ENCODE measurements at regions of chr10 and their contacts with region 1.

Region 1: GRCh38 chr10:24209946-24210491 is 1.1 kb downstream of the KIAA1217 start:
- DNase-seq: no peak
- ATAC-seq: peak in 1 of 2 donors; percentile 49
- H3K4me3 ChIP-seq: peak overlapping the region; percentile 94
- H3K27ac ChIP-seq: peak overlapping the region; percentile 66
- H3K4me1 ChIP-seq: peaks cover 25% of the 10 kb centered on the region
- H3K27me3 ChIP-seq: no peaks in the 10 kb centered on the region

Region 2: GRCh38 chr10:24240039-24240751 is 30.2 kb after region 1 on chr10:
- intact Hi-C with region 1: loop called in 1 of 4 experiments (anchors 2 kb)
- DNase-seq: no peak
- ATAC-seq: peak; percentile 50 to 61
- H3K4me3 ChIP-seq: no peak overlapping the region
- H3K27ac ChIP-seq: no peak overlapping the region
- H3K4me1 ChIP-seq: peaks cover 6% of the 10 kb centered on the region
- H3K27me3 ChIP-seq: no peaks in the 10 kb centered on the region

Region 3: GRCh38 chr10:24277771-24278170 is 67.8 kb after region 1 on chr10:
- intact Hi-C with region 1: loop called in 1 of 4 experiments (anchors 10 kb)
- DNase-seq: peak; percentile 42 to 61 (median 57)
- ATAC-seq: peak; percentile 89 to 90
- H3K4me3 ChIP-seq: no peak overlapping the region
- H3K27ac ChIP-seq: peak overlapping the region; percentile 93
- H3K4me1 ChIP-seq: peaks cover 2% of the 10 kb centered on the region
- H3K27me3 ChIP-seq: no peaks in the 10 kb centered on the region

Region 4: DNA sequence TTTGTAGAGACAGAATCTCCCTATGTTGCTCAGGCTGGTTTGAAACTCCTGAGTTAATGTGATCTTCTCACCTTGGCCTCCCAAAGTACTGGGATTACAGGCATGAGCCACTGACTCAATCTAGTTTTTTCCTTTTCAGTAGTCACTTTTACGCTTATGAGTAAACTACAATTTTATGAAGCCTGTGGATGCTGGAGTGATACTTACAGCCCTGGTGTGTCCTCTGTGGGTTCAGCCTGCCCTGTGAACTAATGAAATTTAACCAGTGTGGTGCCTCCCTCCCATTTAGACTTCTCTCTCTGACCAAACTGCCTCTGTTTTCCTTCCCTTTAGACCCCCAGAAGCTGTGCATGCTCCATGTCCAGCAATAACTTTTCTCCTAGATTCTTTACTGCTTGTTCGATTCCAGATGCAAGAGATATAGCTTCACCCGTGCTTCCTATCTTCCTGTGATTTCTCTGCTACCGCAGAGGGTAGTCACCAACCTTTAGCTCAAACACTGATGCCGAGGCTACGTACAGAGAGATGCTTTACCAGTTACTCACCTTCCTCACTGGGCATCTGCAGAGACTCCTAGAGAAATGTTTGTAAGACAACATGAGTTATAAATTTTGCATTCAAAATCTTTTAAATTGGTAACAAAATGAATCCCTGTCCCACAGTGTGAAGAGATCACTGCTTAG is 89.7 kb after region 1 on chr10:
- intact Hi-C with region 1: loop called in 1 of 4 experiments (anchors 10 kb)
- DNase-seq: no peak
- ATAC-seq: no peak
- H3K4me3 ChIP-seq: no peak overlapping the region
- H3K27ac ChIP-seq: no peak overlapping the region
- H3K4me1 ChIP-seq: peaks cover 5% of the 10 kb centered on the region
- H3K27me3 ChIP-seq: no peaks in the 10 kb centered on the region

Region 5: GRCh38 chr10:24349379-24350001 is 139.5 kb after region 1 on chr10:
- intact Hi-C with region 1: loop called in 2 of 4 experiments (anchors 10 kb)
- DNase-seq: no peak
- ATAC-seq: no peak
- H3K4me3 ChIP-seq: no peak overlapping the region
- H3K27ac ChIP-seq: no peak overlapping the region
- H3K4me1 ChIP-seq: peaks cover 3% of the 10 kb centered on the region
- H3K27me3 ChIP-seq: no peaks in the 10 kb centered on the region

Region 6: GRCh38 chr10:24483489-24484100 is 273.6 kb after region 1 on chr10:
- intact Hi-C with region 1: no loop called
- DNase-seq: no peak
- ATAC-seq: peak; percentile 78 to 94
- H3K4me3 ChIP-seq: no peak overlapping the region
- H3K27ac ChIP-seq: no peak overlapping the region
- H3K4me1 ChIP-seq: peaks cover 3% of the 10 kb centered on the region
- H3K27me3 ChIP-seq: no peaks in the 10 kb centered on the region

Region 7: GRCh38 chr10:24518981-24519597 is 309.1 kb after region 1 on chr10:
- intact Hi-C with region 1: loop called in 1 of 4 experiments (anchors 10 kb)
- DNase-seq: peak; percentile 51 to 66 (median 60)
- ATAC-seq: peak; percentile 67 to 70
- H3K4me3 ChIP-seq: no peak overlapping the region
- H3K27ac ChIP-seq: no peak overlapping the region
- H3K4me1 ChIP-seq: peaks cover 1% of the 10 kb centered on the region
- H3K27me3 ChIP-seq: no peaks in the 10 kb centered on the region

Measured in right cardiac atrium (tissue), 5 donors.